MCF 10A (cell line): ENCODE measurements at regions of chr12 and their contacts with region 1.

Region 1: GRCh38 chr12:103868215-103868614 is 27.2 kb upstream of the NT5DC3 start:
- DNase-seq: no peak
- H3K4me3 Mint-ChIP-seq: no peak overlapping the region
- H3K27ac Mint-ChIP-seq: no peak overlapping the region
- H3K4me1 Mint-ChIP-seq: no peaks in the 10 kb centered on the region
- H3K27me3 Mint-ChIP-seq: no peaks in the 10 kb centered on the region
- CTCF ChIP-seq: no peak

Region 2: DNA sequence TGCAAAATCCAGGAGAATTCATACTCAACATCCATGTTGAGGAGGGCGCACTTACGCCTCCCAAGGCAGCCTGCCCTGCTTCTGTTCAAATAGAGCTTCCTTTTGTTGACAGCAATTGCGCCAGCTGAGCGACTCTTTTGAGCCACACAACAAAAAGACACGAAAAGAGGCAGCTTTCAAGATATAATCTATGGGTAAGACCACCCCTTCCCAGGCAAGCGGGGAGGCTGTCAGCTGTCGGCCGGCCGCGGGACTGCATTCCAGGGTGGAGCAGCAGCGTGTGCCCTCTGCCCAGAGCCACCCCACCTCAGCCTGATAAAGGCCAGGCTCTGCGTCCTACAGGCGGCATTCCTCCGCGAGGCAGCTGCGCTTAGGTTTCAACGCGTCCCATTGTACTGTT is 296.9 kb before region 1 on chr12:
- CTCF ChIA-PET with region 1: interaction called, 17 read pairs
- POLR2A ChIA-PET with region 1: no interaction called
- intact Hi-C with region 1: loop called (anchors 1 kb)
- DNase-seq: no peak
- H3K4me3 Mint-ChIP-seq: no peak overlapping the region
- H3K27ac Mint-ChIP-seq: no peak overlapping the region
- H3K4me1 Mint-ChIP-seq: peaks cover 9% of the 10 kb centered on the region
- H3K27me3 Mint-ChIP-seq: peaks cover 11% of the 10 kb centered on the region
- CTCF ChIP-seq: no peak

Region 3: GRCh38 chr12:103626498-103626897 is 241.7 kb before region 1 on chr12:
- CTCF ChIA-PET with region 1: interaction called, 15 read pairs
- POLR2A ChIA-PET with region 1: no interaction called
- intact Hi-C with region 1: loop called (anchors 1 kb)
- DNase-seq: peak; percentile 47
- H3K4me3 Mint-ChIP-seq: no peak overlapping the region
- H3K27ac Mint-ChIP-seq: no peak overlapping the region
- H3K4me1 Mint-ChIP-seq: no peaks in the 10 kb centered on the region
- H3K27me3 Mint-ChIP-seq: no peaks in the 10 kb centered on the region
- CTCF ChIP-seq: peak; percentile 7

Region 4: DNA sequence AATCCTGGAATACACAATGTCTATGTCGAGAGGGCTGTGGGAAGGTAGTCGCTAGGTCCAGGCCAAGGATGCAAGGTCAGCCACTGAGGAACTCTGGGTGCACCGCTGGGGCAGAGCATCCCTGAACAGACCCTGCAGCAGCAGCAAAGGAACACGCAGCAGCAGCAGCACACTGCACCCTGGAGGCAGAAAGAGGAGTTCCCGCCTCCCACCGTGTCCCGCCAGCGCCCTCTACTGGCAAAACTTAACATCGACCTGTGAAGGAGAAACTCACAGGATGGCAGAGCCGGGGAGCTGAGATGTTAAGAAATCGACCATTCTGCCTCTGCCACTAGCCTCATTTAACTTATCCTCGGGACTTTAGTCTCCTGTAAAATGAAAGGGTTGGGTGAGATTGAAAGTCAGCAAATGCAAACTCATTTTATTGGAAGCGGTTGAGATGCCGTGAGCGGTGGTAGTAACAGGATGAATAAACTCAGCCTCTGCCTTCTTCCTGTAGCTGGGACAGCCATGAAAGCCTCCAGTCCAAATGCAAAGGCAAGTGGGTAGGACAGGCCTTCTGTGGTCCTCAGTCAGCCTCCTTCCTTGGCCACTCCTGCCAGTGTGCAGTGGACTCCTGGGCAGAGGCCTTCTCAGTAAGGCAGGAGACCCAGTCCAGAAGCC is 235.5 kb before region 1 on chr12:
- CTCF ChIA-PET with region 1: interaction called, 15 read pairs
- POLR2A ChIA-PET with region 1: no interaction called
- intact Hi-C with region 1: loop called (anchors 1 kb)
- DNase-seq: peak; percentile 82
- H3K4me3 Mint-ChIP-seq: no peak overlapping the region
- H3K27ac Mint-ChIP-seq: no peak overlapping the region
- H3K4me1 Mint-ChIP-seq: no peaks in the 10 kb centered on the region
- H3K27me3 Mint-ChIP-seq: no peaks in the 10 kb centered on the region
- CTCF ChIP-seq: peak; percentile 99

Region 5: GRCh38 chr12:103771466-103771865 is 96.7 kb before region 1 on chr12:
- CTCF ChIA-PET with region 1: interaction called, 31 read pairs
- POLR2A ChIA-PET with region 1: no interaction called
- intact Hi-C with region 1: loop called (anchors 1 kb)
- DNase-seq: peak; percentile 66
- H3K4me3 Mint-ChIP-seq: no peak overlapping the region
- H3K27ac Mint-ChIP-seq: no peak overlapping the region
- H3K4me1 Mint-ChIP-seq: no peaks in the 10 kb centered on the region
- H3K27me3 Mint-ChIP-seq: no peaks in the 10 kb centered on the region
- CTCF ChIP-seq: peak; percentile 33

Region 6: GRCh38 chr12:103779428-103780092 is 88.7 kb before region 1 on chr12:
- CTCF ChIA-PET with region 1: interaction called, 20 read pairs
- POLR2A ChIA-PET with region 1: no interaction called
- intact Hi-C with region 1: no loop called
- DNase-seq: no peak
- H3K4me3 Mint-ChIP-seq: no peak overlapping the region
- H3K27ac Mint-ChIP-seq: no peak overlapping the region
- H3K4me1 Mint-ChIP-seq: no peaks in the 10 kb centered on the region
- H3K27me3 Mint-ChIP-seq: no peaks in the 10 kb centered on the region
- CTCF ChIP-seq: no peak

Region 7: GRCh38 chr12:104138797-104139152 is 270.6 kb after region 1 on chr12:
- CTCF ChIA-PET with region 1: no interaction called
- POLR2A ChIA-PET with region 1: no interaction called
- intact Hi-C with region 1: no loop called
- DNase-seq: no peak
- H3K4me3 Mint-ChIP-seq: peak overlapping the region; percentile 78
- H3K27ac Mint-ChIP-seq: no peak overlapping the region
- H3K4me1 Mint-ChIP-seq: peaks cover 8% of the 10 kb centered on the region
- H3K27me3 Mint-ChIP-seq: no peaks in the 10 kb centered on the region
- CTCF ChIP-seq: no peak

Region 8: GRCh38 chr12:104371043-104371870 is 503.0 kb after region 1 on chr12:
- CTCF ChIA-PET with region 1: no interaction called
- POLR2A ChIA-PET with region 1: no interaction called
- intact Hi-C with region 1: no loop called
- DNase-seq: peak; percentile 36
- H3K4me3 Mint-ChIP-seq: no peak overlapping the region
- H3K27ac Mint-ChIP-seq: no peak overlapping the region
- H3K4me1 Mint-ChIP-seq: no peaks in the 10 kb centered on the region
- H3K27me3 Mint-ChIP-seq: no peaks in the 10 kb centered on the region
- CTCF ChIP-seq: no peak